Ascending aorta (tissue), 2 donors: ENCODE measurements at regions of chr22 and their contacts with region 1.

Region 1: GRCh38 chr22:33188326-33188725 is 130.1 kb upstream of the SYN3 start:
- DNase-seq: no peak
- H3K4me3 ChIP-seq: no peak overlapping the region
- H3K27ac ChIP-seq: no peak overlapping the region
- H3K4me1 ChIP-seq: no peaks in the 10 kb centered on the region
- H3K27me3 ChIP-seq: no peaks in the 10 kb centered on the region
- CTCF ChIP-seq: no peak

Region 2: GRCh38 chr22:32911503-32911902 is 276.8 kb before region 1 on chr22:
- intact Hi-C with region 1: no loop called
- DNase-seq: no peak
- H3K4me3 ChIP-seq: no peak overlapping the region
- H3K27ac ChIP-seq: no peak overlapping the region
- H3K4me1 ChIP-seq: peaks cover 0 to 10% of the 10 kb centered on the region in 2 donors
- H3K27me3 ChIP-seq: no peaks in the 10 kb centered on the region
- CTCF ChIP-seq: no peak

Region 3: GRCh38 chr22:33083212-33083611 is 105.1 kb before region 1 on chr22:
- intact Hi-C with region 1: no loop called
- DNase-seq: no peak
- H3K4me3 ChIP-seq: no peak overlapping the region
- H3K27ac ChIP-seq: no peak overlapping the region
- H3K4me1 ChIP-seq: no peaks in the 10 kb centered on the region
- H3K27me3 ChIP-seq: no peaks in the 10 kb centered on the region
- CTCF ChIP-seq: no peak

Region 4: GRCh38 chr22:33240888-33241475 is 52.7 kb after region 1 on chr22:
- intact Hi-C with region 1: loop called (anchors 2 kb)
- DNase-seq: no peak
- H3K4me3 ChIP-seq: no peak overlapping the region
- H3K27ac ChIP-seq: no peak overlapping the region
- H3K4me1 ChIP-seq: no peaks in the 10 kb centered on the region
- H3K27me3 ChIP-seq: no peaks in the 10 kb centered on the region
- CTCF ChIP-seq: no peak

Region 5: GRCh38 chr22:33255791-33256190 is 67.5 kb after region 1 on chr22:
- intact Hi-C with region 1: no loop called
- DNase-seq: no peak
- H3K4me3 ChIP-seq: no peak overlapping the region
- H3K27ac ChIP-seq: no peak overlapping the region
- H3K4me1 ChIP-seq: no peaks in the 10 kb centered on the region
- H3K27me3 ChIP-seq: no peaks in the 10 kb centered on the region
- CTCF ChIP-seq: no peak